A673 (cell line): ENCODE measurements at regions of chr6 and their contacts with region 1.

Region 1: GRCh38 chr6:137707590-137708360 is 159.3 kb upstream of the TNFAIP3 start:
- DNase-seq: peak; percentile 78
- H3K4me3 ChIP-seq: no peak overlapping the region
- H3K27ac ChIP-seq: no peak overlapping the region
- H3K4me1 ChIP-seq: no peaks in the 10 kb centered on the region
- H3K27me3 ChIP-seq: no peaks in the 10 kb centered on the region
- CTCF ChIP-seq: peak; percentile 79

Region 2: DNA sequence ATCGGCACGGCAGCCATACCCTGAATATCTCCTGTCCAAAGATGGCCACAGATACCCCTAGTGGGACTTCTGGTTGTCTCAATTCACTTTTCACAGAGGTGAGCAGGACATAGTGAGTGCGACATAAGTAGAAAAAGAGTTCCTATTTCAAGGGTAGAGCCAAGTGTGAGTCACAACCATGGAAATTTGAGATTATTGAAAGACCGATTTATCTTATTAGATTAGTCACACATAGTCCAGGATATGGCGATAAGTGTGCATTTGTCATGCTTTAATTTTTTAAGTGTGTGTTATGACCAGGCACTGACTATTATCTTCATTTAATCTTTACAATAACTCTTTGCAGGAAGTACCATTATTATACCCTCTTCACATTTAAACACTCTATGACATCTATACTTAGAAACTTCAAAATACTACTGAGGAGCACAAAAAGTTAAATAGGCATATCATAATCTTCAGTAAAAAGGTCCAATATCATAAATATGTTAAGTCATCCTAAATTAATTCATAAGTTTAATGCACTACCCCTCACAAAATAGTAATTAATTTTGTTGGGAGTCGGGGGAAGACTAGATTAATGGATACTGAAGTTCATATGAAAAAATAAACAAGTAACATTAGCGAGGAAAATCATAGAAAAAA is 145.9 kb after region 1 on chr6:
- CTCF ChIA-PET with region 1: no interaction called
- POLR2A ChIA-PET with region 1: no interaction called
- intact Hi-C with region 1: loop called (anchors 5 kb)
- DNase-seq: peak; percentile 90
- H3K4me3 ChIP-seq: no peak overlapping the region
- H3K27ac ChIP-seq: no peak overlapping the region
- H3K4me1 ChIP-seq: no peaks in the 10 kb centered on the region
- H3K27me3 ChIP-seq: peaks cover 91% of the 10 kb centered on the region
- CTCF ChIP-seq: no peak

Region 3: GRCh38 chr6:137944793-137945498 is 237.2 kb after region 1 on chr6:
- CTCF ChIA-PET with region 1: interaction called, 4 read pairs
- POLR2A ChIA-PET with region 1: no interaction called
- intact Hi-C with region 1: loop called (anchors 2 kb)
- DNase-seq: peak; percentile 37
- H3K4me3 ChIP-seq: no peak overlapping the region
- H3K27ac ChIP-seq: no peak overlapping the region
- H3K4me1 ChIP-seq: no peaks in the 10 kb centered on the region
- H3K27me3 ChIP-seq: peaks cover under 1% of the 10 kb centered on the region
- CTCF ChIP-seq: peak; percentile 78

Region 4: GRCh38 chr6:138001750-138002349 is 294.1 kb after region 1 on chr6:
- CTCF ChIA-PET with region 1: interaction called, 7 read pairs
- POLR2A ChIA-PET with region 1: no interaction called
- intact Hi-C with region 1: loop called (anchors 1 kb)
- DNase-seq: peak; percentile 51
- H3K4me3 ChIP-seq: no peak overlapping the region
- H3K27ac ChIP-seq: no peak overlapping the region
- H3K4me1 ChIP-seq: no peaks in the 10 kb centered on the region
- H3K27me3 ChIP-seq: peaks cover 3% of the 10 kb centered on the region
- CTCF ChIP-seq: peak; percentile 91